CD4-positive, alpha-beta memory T cell (primary cell): ENCODE measurements at regions of chr19 and their contacts with region 1.

Region 1: DNA sequence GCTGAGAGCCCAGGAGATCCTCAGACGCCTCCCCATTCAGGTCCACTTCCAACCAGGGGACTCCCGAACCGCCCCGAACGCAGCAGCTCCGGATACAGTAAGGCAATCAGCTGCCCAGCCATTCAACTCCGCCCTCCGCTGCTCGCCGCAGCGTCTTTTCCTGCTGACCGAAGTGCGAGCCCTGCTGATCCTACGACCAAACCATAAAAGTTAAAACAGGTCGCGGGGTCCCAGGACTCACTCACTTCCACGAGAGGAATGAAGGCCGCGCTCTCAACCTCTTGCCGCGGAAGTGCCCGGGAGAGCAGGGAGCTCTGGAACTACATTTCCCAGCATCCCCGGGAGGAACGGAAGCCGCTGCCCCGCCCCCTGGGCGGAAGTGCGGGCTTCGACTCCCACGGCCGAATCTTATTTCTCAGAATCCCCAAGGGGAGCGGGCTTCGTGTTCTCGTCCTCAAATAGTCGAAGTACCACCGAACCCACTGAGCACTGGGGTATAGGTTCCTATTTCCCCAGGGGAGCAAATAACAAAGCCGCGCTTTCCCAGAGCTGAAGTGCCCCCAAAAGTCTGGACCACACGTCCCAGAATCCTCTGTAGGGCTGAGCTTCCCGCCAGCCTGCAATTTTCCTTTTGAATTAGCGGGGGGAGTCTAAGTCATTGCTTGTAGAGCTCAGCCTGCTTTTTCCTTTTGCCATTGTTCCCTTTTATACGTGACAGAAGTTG is at the start of gene ZNF45:
- DNase-seq: peak; percentile 86 to 90 (median 86)
- H3K4me3 ChIP-seq: peak within 1 kb of the TSS; percentile 91 to 96
- H3K4me3 Mint-ChIP-seq: peak within 1 kb of the TSS; percentile 94 to 97 (median 95)
- H3K27ac ChIP-seq: peak within 1 kb of the TSS; percentile 71
- H3K27ac Mint-ChIP-seq: peak within 1 kb of the TSS; percentile 86 to 97 (median 96)
- H3K4me1 ChIP-seq: peaks cover 21% of the 10 kb centered on the region
- H3K4me1 Mint-ChIP-seq: peaks cover 9 to 47% (median 21%) of the 10 kb centered on the region in 4 donors
- H3K27me3 ChIP-seq: no peaks in the 10 kb centered on the region
- H3K27me3 Mint-ChIP-seq: peaks cover 0 to 2% of the 10 kb centered on the region in 2 donors
- total RNA-seq, gene ZNF45: 25.1 to 29.6 TPM

Region 2: GRCh38 chr19:43678512-43679261 is 256.5 kb before region 1 on chr19:
- CTCF ChIA-PET with region 1: no interaction called
- POLR2A ChIA-PET with region 1: no interaction called
- intact Hi-C with region 1: no loop called
- DNase-seq: no peak
- H3K4me3 ChIP-seq: no peak overlapping the region
- H3K4me3 Mint-ChIP-seq: no peak overlapping the region
- H3K27ac ChIP-seq: no peak overlapping the region
- H3K27ac Mint-ChIP-seq: no peak overlapping the region
- H3K4me1 ChIP-seq: no peaks in the 10 kb centered on the region
- H3K4me1 Mint-ChIP-seq: peaks cover 3 to 9% (median 5%) of the 10 kb centered on the region in 4 donors
- H3K27me3 ChIP-seq: no peaks in the 10 kb centered on the region
- H3K27me3 Mint-ChIP-seq: no peaks in the 10 kb centered on the region

Region 3: GRCh38 chr19:43923875-43924274 is 11.3 kb before region 1 on chr19:
- CTCF ChIA-PET with region 1: interaction called, 3 read pairs
- POLR2A ChIA-PET with region 1: interaction called, 12 read pairs
- intact Hi-C with region 1: no loop called
- DNase-seq: no peak
- H3K4me3 ChIP-seq: no peak overlapping the region
- H3K4me3 Mint-ChIP-seq: no peak overlapping the region
- H3K27ac ChIP-seq: no peak overlapping the region
- H3K27ac Mint-ChIP-seq: no peak overlapping the region
- H3K4me1 ChIP-seq: no peaks in the 10 kb centered on the region
- H3K4me1 Mint-ChIP-seq: peaks cover 0 to 2% (median 0%) of the 10 kb centered on the region in 4 donors
- H3K27me3 ChIP-seq: no peaks in the 10 kb centered on the region
- H3K27me3 Mint-ChIP-seq: no peaks in the 10 kb centered on the region

Region 4: GRCh38 chr19:43950834-43951645 is 15.9 kb after region 1 on chr19 and contains the start of gene ZNF221:
- CTCF ChIA-PET with region 1: interaction called, 3 read pairs
- POLR2A ChIA-PET with region 1: interaction called, 26 read pairs
- intact Hi-C with region 1: loop called (anchors 2 kb)
- DNase-seq: peak; percentile 38 to 44 (median 43)
- H3K4me3 ChIP-seq: peak within 1 kb of the TSS; percentile 66 to 92
- H3K4me3 Mint-ChIP-seq: peak within 1 kb of the TSS; percentile 94 to 98 (median 96)
- H3K27ac ChIP-seq: peak within 1 kb of the TSS; percentile 23
- H3K27ac Mint-ChIP-seq: peak within 1 kb of the TSS in 6 of 7 donors; percentile 36 to 92 (median 86)
- H3K4me1 ChIP-seq: peaks cover 10% of the 10 kb centered on the region
- H3K4me1 Mint-ChIP-seq: peaks cover 5 to 18% (median 10%) of the 10 kb centered on the region in 4 donors
- H3K27me3 ChIP-seq: no peaks in the 10 kb centered on the region
- H3K27me3 Mint-ChIP-seq: peaks cover 16 to 18% of the 10 kb centered on the region in 2 donors
- total RNA-seq, gene ZNF221: 2.9 to 3.2 TPM

Region 5: GRCh38 chr19:43983912-43984686 is 49.0 kb after region 1 on chr19 and contains the start of gene ZNF155:
- CTCF ChIA-PET with region 1: no interaction called
- POLR2A ChIA-PET with region 1: interaction called, 6 read pairs
- intact Hi-C with region 1: loop called (anchors 2 kb)
- DNase-seq: peak; percentile 64 to 71 (median 68)
- H3K4me3 ChIP-seq: peak within 1 kb of the TSS; percentile 59 to 90
- H3K4me3 Mint-ChIP-seq: peak within 1 kb of the TSS; percentile 92 to 99 (median 98)
- H3K27ac ChIP-seq: peak within 1 kb of the TSS; percentile 58
- H3K27ac Mint-ChIP-seq: peak within 1 kb of the TSS; percentile 74 to 98 (median 95)
- H3K4me1 ChIP-seq: peaks cover 14% of the 10 kb centered on the region
- H3K4me1 Mint-ChIP-seq: peaks cover 8 to 12% (median 10%) of the 10 kb centered on the region in 4 donors
- H3K27me3 ChIP-seq: no peaks in the 10 kb centered on the region
- H3K27me3 Mint-ChIP-seq: no peaks in the 10 kb centered on the region
- total RNA-seq, gene ZNF155: 12.9 to 14.1 TPM

Region 6: GRCh38 chr19:44093931-44094765 is 159.0 kb after region 1 on chr19 and contains the start of gene ZNF224:
- CTCF ChIA-PET with region 1: no interaction called
- POLR2A ChIA-PET with region 1: interaction called, 11 read pairs
- intact Hi-C with region 1: loop called (anchors 1 kb)
- DNase-seq: peak; percentile 73 to 84 (median 76)
- H3K4me3 ChIP-seq: peak within 1 kb of the TSS; percentile 65 to 75
- H3K4me3 Mint-ChIP-seq: peak within 1 kb of the TSS; percentile 85 to 99 (median 98)
- H3K27ac ChIP-seq: peak within 1 kb of the TSS; percentile 69
- H3K27ac Mint-ChIP-seq: peak within 1 kb of the TSS; percentile 58 to 97 (median 90)
- H3K4me1 ChIP-seq: peaks cover 9% of the 10 kb centered on the region
- H3K4me1 Mint-ChIP-seq: peaks cover 9 to 33% (median 23%) of the 10 kb centered on the region in 4 donors
- H3K27me3 ChIP-seq: no peaks in the 10 kb centered on the region
- H3K27me3 Mint-ChIP-seq: no peaks in the 10 kb centered on the region
- total RNA-seq, gene ZNF224: 86.9 to 91.2 TPM

Region 7: GRCh38 chr19:44212250-44212865 is 277.2 kb after region 1 on chr19 and contains the start of gene ZNF227:
- CTCF ChIA-PET with region 1: interaction called, 4 read pairs
- POLR2A ChIA-PET with region 1: interaction called, 6 read pairs
- intact Hi-C with region 1: loop called (anchors 1 kb)
- DNase-seq: peak; percentile 73 to 86 (median 79)
- H3K4me3 ChIP-seq: peak within 1 kb of the TSS; percentile 52 to 93
- H3K4me3 Mint-ChIP-seq: peak within 1 kb of the TSS; percentile 96 to 99 (median 98)
- H3K27ac ChIP-seq: peak within 1 kb of the TSS; percentile 78
- H3K27ac Mint-ChIP-seq: peak within 1 kb of the TSS; percentile 85 to 99 (median 97)
- H3K4me1 ChIP-seq: peaks cover 17% of the 10 kb centered on the region
- H3K4me1 Mint-ChIP-seq: peaks cover 20 to 34% (median 23%) of the 10 kb centered on the region in 4 donors
- H3K27me3 ChIP-seq: no peaks in the 10 kb centered on the region
- H3K27me3 Mint-ChIP-seq: no peaks in the 10 kb centered on the region
- total RNA-seq, gene ZNF227: 51.6 to 54.4 TPM

Region 8: DNA sequence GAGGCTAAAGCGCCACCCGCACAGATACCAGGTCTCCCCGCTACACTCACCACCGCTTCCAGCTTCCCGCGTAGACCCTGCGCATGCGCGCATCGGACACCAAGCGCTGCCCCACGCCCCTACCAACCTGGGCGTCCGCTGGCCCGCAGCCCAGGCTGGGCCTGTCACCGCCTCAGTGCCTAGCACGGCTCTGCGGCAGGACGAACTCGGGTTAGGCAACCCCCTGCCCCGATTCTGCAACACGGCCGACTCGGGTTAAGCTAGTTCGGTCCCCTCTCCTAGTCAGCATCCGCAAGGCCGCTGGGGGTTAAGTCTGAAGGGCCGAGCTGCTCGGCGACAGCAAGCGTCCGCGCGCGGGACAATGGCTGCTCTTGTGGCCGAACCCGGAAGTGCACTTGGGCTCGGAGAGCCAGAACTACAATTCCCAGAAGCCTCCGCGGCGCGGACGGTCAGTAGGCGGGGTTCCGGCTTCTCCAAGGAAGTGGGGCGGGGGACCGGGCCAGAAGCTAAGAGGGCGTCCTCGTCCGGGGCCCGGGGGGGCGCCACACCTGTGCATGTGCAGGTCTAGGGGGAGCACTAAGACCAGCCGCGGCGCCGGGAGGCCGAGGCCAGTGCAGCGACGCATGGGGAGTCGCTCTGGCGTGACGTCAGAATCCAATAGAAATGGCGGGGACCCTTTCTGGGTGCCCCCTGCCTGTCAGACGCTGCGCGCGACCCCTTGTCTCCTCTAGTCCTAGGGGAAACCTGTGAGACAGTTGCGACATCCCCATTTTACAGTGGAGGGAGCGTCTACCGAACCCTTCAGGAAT is 565.2 kb after region 1 on chr19 and contains the start of gene ZNF180:
- CTCF ChIA-PET with region 1: no interaction called
- POLR2A ChIA-PET with region 1: interaction called, 5 read pairs
- intact Hi-C with region 1: loop called (anchors 1 kb)
- DNase-seq: peak; percentile 92 to 95 (median 93)
- H3K4me3 ChIP-seq: peak within 1 kb of the TSS; percentile 89 to 95
- H3K4me3 Mint-ChIP-seq: peak within 1 kb of the TSS; percentile 94 to 97 (median 96)
- H3K27ac ChIP-seq: peak within 1 kb of the TSS; percentile 67
- H3K27ac Mint-ChIP-seq: peak within 1 kb of the TSS; percentile 86 to 96 (median 93)
- H3K4me1 ChIP-seq: peaks cover 25% of the 10 kb centered on the region
- H3K4me1 Mint-ChIP-seq: peaks cover 16 to 42% (median 31%) of the 10 kb centered on the region in 4 donors
- H3K27me3 ChIP-seq: no peaks in the 10 kb centered on the region
- H3K27me3 Mint-ChIP-seq: peaks cover 3 to 7% of the 10 kb centered on the region in 2 donors
- total RNA-seq, gene ZNF180: 17.1 to 18.0 TPM